ENCODE measurements at regions of chr14 and their contacts with region 1.

Region 1: GRCh38 chr14:88667555-88668273 is 104.9 kb downstream of the ZC3H14 start:
- DNase-seq: peak; percentile 32
- ATAC-seq: peak; percentile 83
- H3K4me3 Mint-ChIP-seq: peak overlapping the region; percentile 64
- H3K27ac Mint-ChIP-seq: peak overlapping the region; percentile 72
- H3K4me1 Mint-ChIP-seq: peaks cover 20% of the 10 kb centered on the region
- H3K27me3 Mint-ChIP-seq: no peaks in the 10 kb centered on the region
- CTCF ChIP-seq: peak; percentile 62

Region 2: DNA sequence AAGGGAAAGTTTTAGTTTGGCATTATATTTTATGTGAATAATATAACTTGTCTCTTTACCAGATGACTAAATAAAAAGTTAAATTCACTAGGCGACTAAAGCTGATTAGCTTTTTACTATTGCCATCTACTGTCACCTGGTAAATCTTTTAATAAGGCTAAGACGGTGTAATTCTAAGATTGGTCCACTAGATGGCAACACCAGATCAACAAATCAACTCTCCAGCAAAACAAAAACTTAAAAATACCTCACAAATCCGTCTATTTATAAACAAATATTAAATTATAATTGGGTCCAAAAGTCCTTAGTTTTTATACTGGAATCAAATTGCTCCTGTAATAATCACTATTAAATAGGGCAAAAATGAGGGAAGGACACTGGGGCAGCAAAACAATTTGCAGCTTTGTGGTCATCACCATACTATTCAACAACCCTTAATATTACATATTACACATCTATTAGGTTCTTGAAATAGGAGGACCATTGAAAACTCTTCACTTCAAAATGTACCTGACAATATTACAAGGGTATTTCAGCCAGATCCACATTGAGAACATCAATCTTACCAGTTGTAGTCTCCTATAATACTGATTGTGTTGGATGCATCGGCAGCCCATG is 722.6 kb before region 1 on chr14:
- CTCF ChIA-PET with region 1: no interaction called
- POLR2A ChIA-PET with region 1: no interaction called
- intact Hi-C with region 1: loop called (anchors 5 kb)
- DNase-seq: no peak
- ATAC-seq: no peak
- H3K4me3 Mint-ChIP-seq: no peak overlapping the region
- H3K27ac Mint-ChIP-seq: no peak overlapping the region
- H3K4me1 Mint-ChIP-seq: no peaks in the 10 kb centered on the region
- H3K27me3 Mint-ChIP-seq: no peaks in the 10 kb centered on the region
- CTCF ChIP-seq: no peak

Region 3: DNA sequence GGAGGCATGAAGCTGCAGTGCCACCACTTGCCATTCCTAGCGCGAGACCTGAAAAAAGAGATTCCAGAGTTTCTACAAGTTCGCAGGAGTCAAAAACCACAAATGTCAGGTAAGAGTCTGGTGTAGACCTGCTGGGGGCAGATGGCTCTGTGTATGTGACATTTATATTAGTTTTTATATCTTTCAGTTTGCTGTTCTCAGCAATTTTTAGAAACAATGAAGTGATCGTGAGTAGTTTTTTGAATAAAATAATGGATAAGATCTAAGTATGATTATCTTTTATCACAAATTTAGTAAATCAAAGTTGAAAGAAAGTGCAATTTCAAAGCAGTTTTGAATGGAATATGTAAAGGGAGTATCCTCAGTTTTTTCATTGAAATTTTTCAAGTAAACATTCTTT is 95.6 kb before region 1 on chr14:
- CTCF ChIA-PET with region 1: no interaction called
- POLR2A ChIA-PET with region 1: no interaction called
- intact Hi-C with region 1: no loop called
- DNase-seq: no peak
- ATAC-seq: no peak
- H3K4me3 Mint-ChIP-seq: no peak overlapping the region
- H3K27ac Mint-ChIP-seq: no peak overlapping the region
- H3K4me1 Mint-ChIP-seq: no peaks in the 10 kb centered on the region
- H3K27me3 Mint-ChIP-seq: no peaks in the 10 kb centered on the region
- CTCF ChIP-seq: no peak

Region 4: DNA sequence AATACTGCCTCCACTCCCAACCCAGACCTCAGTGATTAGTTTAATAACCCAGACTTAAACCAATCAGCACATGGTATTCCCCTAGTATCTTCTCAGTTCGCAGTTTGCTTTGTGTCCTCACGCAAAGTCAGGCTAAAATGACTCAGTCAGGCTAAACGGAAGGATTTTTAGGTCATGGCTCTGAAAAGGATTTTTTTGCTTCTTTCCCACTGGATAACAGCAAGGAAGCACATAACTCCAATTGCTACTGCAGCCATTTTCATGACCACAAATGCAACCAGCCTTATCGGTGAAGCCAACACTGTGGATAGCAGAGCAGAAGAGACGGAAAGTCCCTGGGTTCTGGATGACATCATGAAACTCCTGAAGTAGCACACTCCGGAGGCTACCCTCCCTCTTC is 37.1 kb before region 1 on chr14:
- CTCF ChIA-PET with region 1: no interaction called
- POLR2A ChIA-PET with region 1: no interaction called
- intact Hi-C with region 1: no loop called
- DNase-seq: no peak
- ATAC-seq: no peak
- H3K4me3 Mint-ChIP-seq: no peak overlapping the region
- H3K27ac Mint-ChIP-seq: no peak overlapping the region
- H3K4me1 Mint-ChIP-seq: no peaks in the 10 kb centered on the region
- H3K27me3 Mint-ChIP-seq: no peaks in the 10 kb centered on the region
- CTCF ChIP-seq: no peak

Region 5: GRCh38 chr14:88824314-88825077 is 156.8 kb after region 1 on chr14 and contains the start of gene TTC8:
- CTCF ChIA-PET with region 1: interaction called, 9 read pairs
- POLR2A ChIA-PET with region 1: no interaction called
- intact Hi-C with region 1: loop called (anchors 1 kb)
- DNase-seq: peak; percentile 77
- ATAC-seq: peak; percentile 97
- H3K4me3 Mint-ChIP-seq: peak within 1 kb of the TSS; percentile 88
- H3K27ac Mint-ChIP-seq: peak within 1 kb of the TSS; percentile 100
- H3K4me1 Mint-ChIP-seq: peaks cover 14% of the 10 kb centered on the region
- H3K27me3 Mint-ChIP-seq: peaks cover 11% of the 10 kb centered on the region
- CTCF ChIP-seq: no peak
- total RNA-seq, gene TTC8: 4.8 and 6.0 TPM in 2 replicates

Region 6: GRCh38 chr14:88929656-88930425 is 262.1 kb after region 1 on chr14:
- CTCF ChIA-PET with region 1: interaction called, 3 read pairs
- POLR2A ChIA-PET with region 1: no interaction called
- intact Hi-C with region 1: loop called (anchors 1 kb)
- DNase-seq: no peak
- ATAC-seq: no peak
- H3K4me3 Mint-ChIP-seq: no peak overlapping the region
- H3K27ac Mint-ChIP-seq: no peak overlapping the region
- H3K4me1 Mint-ChIP-seq: no peaks in the 10 kb centered on the region
- H3K27me3 Mint-ChIP-seq: peaks cover 6% of the 10 kb centered on the region
- CTCF ChIP-seq: no peak

Region 7: GRCh38 chr14:89027097-89027740 is 359.5 kb after region 1 on chr14:
- CTCF ChIA-PET with region 1: interaction called, 14 read pairs
- POLR2A ChIA-PET with region 1: no interaction called
- intact Hi-C with region 1: loop called (anchors 5 kb)
- DNase-seq: peak; percentile 67
- ATAC-seq: peak; percentile 92
- H3K4me3 Mint-ChIP-seq: peak overlapping the region; percentile 65
- H3K27ac Mint-ChIP-seq: no peak overlapping the region
- H3K4me1 Mint-ChIP-seq: peaks cover 3% of the 10 kb centered on the region
- H3K27me3 Mint-ChIP-seq: peaks cover 41% of the 10 kb centered on the region
- CTCF ChIP-seq: peak; percentile 54

Region 8: GRCh38 chr14:89915114-89915878 is 1247.6 kb after region 1 on chr14:
- CTCF ChIA-PET with region 1: interaction called, 3 read pairs
- POLR2A ChIA-PET with region 1: no interaction called
- intact Hi-C with region 1: loop called (anchors 1 kb)
- DNase-seq: peak; percentile 19
- ATAC-seq: peak; percentile 54
- H3K4me3 Mint-ChIP-seq: no peak overlapping the region
- H3K27ac Mint-ChIP-seq: no peak overlapping the region
- H3K4me1 Mint-ChIP-seq: peaks cover 3% of the 10 kb centered on the region
- H3K27me3 Mint-ChIP-seq: no peaks in the 10 kb centered on the region
- CTCF ChIP-seq: peak; percentile 94

Measured in activated B cell treated with CpG ODN at 0.5 μM for 24 hours (primary cell).